ENCODE measurements at regions of chr14 and their contacts with region 1.

Region 1: DNA sequence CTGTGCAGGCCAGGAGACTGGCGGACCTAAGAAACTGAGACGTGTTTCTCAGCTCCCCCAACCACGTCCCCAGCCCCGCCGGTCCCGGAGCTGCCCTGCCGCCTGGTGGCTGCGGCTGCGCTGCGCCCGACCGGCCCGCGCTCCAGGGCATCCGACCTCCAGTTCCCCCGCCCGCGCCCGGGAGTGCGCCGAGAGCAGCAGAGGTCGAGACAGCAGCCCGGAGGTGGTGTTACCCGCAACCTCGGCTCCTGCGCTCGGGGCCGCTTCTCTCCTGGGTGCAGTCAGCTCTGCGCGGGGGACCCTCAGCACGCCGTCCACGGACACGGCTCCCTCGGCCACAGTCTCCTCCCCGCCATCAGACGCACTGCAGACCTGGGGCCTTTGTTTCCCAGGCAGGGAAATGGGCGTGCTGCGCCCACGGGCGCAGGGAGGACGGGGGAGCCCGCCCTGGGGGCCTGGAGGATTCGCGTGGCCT is 21.6 kb upstream of the GPR132 start:
- DNase-seq: peak; percentile 93
- H3K4me3 Mint-ChIP-seq: peak overlapping the region; percentile 74
- H3K27ac Mint-ChIP-seq: peak overlapping the region; percentile 65
- H3K4me1 Mint-ChIP-seq: peaks cover 13% of the 10 kb centered on the region
- H3K27me3 Mint-ChIP-seq: no peaks in the 10 kb centered on the region

Region 2: GRCh38 chr14:105059035-105059924 is 27.6 kb before region 1 on chr14:
- CTCF ChIA-PET with region 1: interaction called, 179 read pairs
- POLR2A ChIA-PET with region 1: interaction called, 7 read pairs
- intact Hi-C with region 1: loop called (anchors 1 kb)
- DNase-seq: peak; percentile 81
- H3K4me3 Mint-ChIP-seq: peak overlapping the region; percentile 94
- H3K27ac Mint-ChIP-seq: peak overlapping the region; percentile 89
- H3K4me1 Mint-ChIP-seq: peaks cover 46% of the 10 kb centered on the region
- H3K27me3 Mint-ChIP-seq: no peaks in the 10 kb centered on the region

Region 3: DNA sequence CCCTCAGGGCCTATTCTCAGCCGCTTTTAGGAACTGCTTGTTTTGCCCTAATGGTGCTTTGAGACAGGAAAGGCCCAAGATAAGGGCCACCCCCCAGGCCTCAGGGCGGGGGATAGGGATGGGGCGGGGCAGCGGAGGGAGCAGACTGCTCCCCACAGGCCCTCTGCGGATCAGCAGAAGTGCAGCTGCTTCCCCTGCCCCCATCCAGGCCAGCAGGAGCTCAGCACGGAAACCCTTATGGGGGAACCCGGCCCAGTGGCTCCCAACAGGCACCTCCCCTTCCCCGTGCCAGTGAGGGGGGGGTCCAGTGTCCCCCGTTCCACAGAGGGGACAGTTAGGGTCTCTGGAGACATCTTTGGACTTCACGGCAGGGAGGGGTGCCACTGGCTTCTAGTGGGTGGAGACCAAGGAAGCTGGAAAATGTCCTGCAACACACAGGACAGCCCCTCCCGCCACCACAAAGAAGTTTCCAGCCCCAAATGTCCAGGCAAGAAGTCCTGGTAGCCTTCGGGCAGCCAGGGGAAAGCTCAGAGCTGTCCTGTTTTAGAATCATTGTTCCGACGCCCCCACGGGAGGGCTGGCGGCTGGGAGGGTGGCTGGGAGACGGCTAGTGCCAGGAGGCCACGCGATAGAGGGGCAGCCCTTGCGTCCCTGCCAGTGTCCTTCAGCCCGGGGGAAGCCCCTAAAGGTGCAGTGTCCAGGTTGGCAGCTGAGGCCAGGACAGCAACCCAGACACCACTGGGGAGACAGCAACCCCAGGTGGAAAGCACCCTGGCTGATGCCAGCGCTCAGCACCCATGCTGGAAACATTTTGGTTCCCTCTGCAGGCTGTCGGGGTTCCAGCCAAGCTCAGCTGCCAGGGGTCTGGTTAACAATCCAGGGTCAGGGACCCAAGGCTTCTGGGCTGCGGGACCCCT is 11.2 kb before region 1 on chr14:
- CTCF ChIA-PET with region 1: interaction called, 60 read pairs
- POLR2A ChIA-PET with region 1: interaction called, 13 read pairs
- intact Hi-C with region 1: loop called (anchors 2 kb)
- DNase-seq: peak; percentile 58
- H3K4me3 Mint-ChIP-seq: no peak overlapping the region
- H3K27ac Mint-ChIP-seq: no peak overlapping the region
- H3K4me1 Mint-ChIP-seq: peaks cover 30% of the 10 kb centered on the region
- H3K27me3 Mint-ChIP-seq: peaks cover 3% of the 10 kb centered on the region

Region 4: GRCh38 chr14:105180592-105181548 is 94.0 kb after region 1 on chr14 and contains the start of gene NUDT14:
- CTCF ChIA-PET with region 1: interaction called, 13 read pairs
- POLR2A ChIA-PET with region 1: no interaction called
- intact Hi-C with region 1: no loop called
- DNase-seq: peak; percentile 91
- H3K4me3 Mint-ChIP-seq: peak within 1 kb of the TSS; percentile 71
- H3K27ac Mint-ChIP-seq: no peak within 1 kb of the TSS
- H3K4me1 Mint-ChIP-seq: peaks cover 11% of the 10 kb centered on the region
- H3K27me3 Mint-ChIP-seq: no peaks in the 10 kb centered on the region
- total RNA-seq, gene NUDT14: 14.7 to 14.8 TPM

Region 5: GRCh38 chr14:105203057-105203531 is 116.2 kb after region 1 on chr14:
- CTCF ChIA-PET with region 1: interaction called, 4 read pairs
- POLR2A ChIA-PET with region 1: no interaction called
- intact Hi-C with region 1: loop called (anchors 5 kb)
- DNase-seq: peak; percentile 71
- H3K4me3 Mint-ChIP-seq: no peak overlapping the region
- H3K27ac Mint-ChIP-seq: no peak overlapping the region
- H3K4me1 Mint-ChIP-seq: peaks cover 9% of the 10 kb centered on the region
- H3K27me3 Mint-ChIP-seq: peaks cover 14% of the 10 kb centered on the region

Region 6: GRCh38 chr14:105351920-105352851 is 265.3 kb after region 1 on chr14:
- CTCF ChIA-PET with region 1: interaction called, 20 read pairs
- POLR2A ChIA-PET with region 1: no interaction called
- intact Hi-C with region 1: loop called (anchors 1 kb)
- DNase-seq: peak; percentile 94
- H3K4me3 Mint-ChIP-seq: no peak overlapping the region
- H3K27ac Mint-ChIP-seq: no peak overlapping the region
- H3K4me1 Mint-ChIP-seq: peaks cover 2% of the 10 kb centered on the region
- H3K27me3 Mint-ChIP-seq: no peaks in the 10 kb centered on the region

Measured in activated CD4-positive, alpha-beta memory T cell treated with anti-CD3 and anti-CD28 coated beads for 36 hours (primary cell).